Esophagus squamous epithelium (tissue), 5 donors: ENCODE measurements at regions of chr10 and their contacts with region 1.

Region 1: DNA sequence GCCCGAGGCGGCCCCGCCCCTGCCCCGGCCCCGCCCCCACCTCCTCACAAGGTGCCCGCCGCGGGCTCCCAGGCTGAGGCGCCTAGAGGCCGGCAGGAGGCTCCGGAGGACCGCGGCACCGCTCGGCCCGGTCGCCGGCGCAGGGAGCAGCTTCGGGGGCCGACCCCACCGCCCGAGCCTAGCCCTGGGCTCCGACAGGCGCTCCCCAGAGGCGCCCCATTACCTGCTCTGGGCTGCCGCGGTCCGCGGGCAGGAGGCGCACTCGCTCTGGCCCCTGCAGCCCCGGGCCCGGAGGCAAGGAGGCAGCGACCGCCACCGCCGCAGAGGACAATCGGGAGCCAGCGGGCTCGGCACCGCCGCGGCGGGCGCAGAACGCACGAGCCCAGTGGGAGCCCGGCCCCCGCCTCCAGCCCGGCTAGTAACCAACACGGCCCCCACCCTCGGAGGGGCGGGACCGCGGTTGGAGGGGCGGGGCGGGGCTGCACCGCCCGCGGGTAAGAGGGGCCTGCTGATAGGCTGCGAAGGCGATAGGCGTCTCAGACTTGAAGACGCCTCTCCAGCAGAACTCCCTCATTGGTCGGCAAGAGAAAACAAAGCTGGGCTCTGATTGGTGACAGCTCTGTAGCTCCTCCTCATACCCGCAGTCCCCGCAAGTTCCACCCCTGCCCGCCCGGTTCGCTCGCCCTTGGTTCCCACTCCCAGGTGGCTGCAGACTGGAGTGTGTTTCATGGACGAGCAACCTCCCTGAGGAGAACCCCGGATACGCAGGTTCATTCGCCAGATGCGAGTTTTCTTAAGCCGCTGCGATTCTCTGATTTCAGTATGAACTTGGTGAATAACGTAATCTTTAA is at the start of gene MPP7:
- DNase-seq: peak; percentile 85
- H3K4me3 ChIP-seq: peak within 1 kb of the TSS; percentile 63 to 98 (median 88)
- H3K27ac ChIP-seq: peak within 1 kb of the TSS; percentile 88 to 99 (median 94)
- H3K4me1 ChIP-seq: peaks cover 0 to 43% (median 4%) of the 10 kb centered on the region in 3 donors
- H3K27me3 ChIP-seq: peaks cover 0 to 19% (median 0%) of the 10 kb centered on the region in 4 donors
- CTCF ChIP-seq: peak in 4 of 6 experiments; percentile 29 to 47 (median 40)
- POLR2A ChIP-seq: peak in 2 of 4 donors; percentile 49 to 67
- total RNA-seq, gene MPP7: 34.3 to 43.3 (median 37.0) TPM

Region 2: DNA sequence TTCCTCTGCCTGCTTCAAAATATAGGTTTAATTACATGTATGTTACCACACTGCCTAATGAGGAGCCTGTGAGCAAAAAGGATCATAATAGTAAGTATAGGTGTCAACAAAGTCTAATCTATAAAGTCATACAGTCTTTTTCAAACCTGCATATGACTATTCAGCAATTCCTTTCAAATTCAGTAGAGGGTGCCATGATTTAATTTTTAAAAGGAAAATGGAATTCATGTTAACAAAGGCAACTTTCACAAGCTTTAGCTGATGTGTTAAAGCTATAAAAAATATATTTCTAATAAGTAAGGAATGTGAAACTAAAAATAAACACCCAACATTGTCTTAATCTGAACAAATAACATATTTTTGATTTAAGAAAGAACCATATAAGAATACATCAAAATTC is 52.1 kb before region 1 on chr10:
- intact Hi-C with region 1: loop called (anchors 10 kb)
- DNase-seq: no peak
- H3K4me3 ChIP-seq: no peak overlapping the region
- H3K27ac ChIP-seq: peak overlapping the region in 2 of 4 donors; percentile 52 to 73
- H3K4me1 ChIP-seq: peaks cover 4 to 64% (median 23%) of the 10 kb centered on the region in 3 donors
- H3K27me3 ChIP-seq: no peaks in the 10 kb centered on the region
- CTCF ChIP-seq: peak in 5 of 6 experiments; percentile 34 to 68 (median 52)
- POLR2A ChIP-seq: no peak

Region 3: DNA sequence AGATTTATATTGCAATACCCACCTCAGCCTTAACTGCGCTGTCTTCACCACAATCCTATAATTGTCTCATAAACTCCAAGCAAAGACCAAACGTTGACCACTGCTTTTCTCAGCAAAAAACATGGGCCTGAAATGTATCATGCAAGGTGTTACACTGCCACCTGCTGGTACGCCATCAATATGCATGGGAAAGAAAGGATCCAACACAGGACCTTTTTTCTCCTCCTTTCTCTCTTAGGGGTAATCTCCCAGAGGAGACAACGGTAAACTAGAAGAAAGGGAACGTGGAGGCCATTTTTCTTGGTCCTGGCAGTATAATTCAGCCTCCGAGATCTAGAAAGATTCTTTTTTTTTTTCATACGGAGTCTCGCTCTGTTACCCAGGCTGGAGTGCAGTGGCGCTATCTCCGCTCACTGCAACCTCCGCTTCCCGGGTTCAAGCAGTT is 79.1 kb after region 1 on chr10:
- intact Hi-C with region 1: loop called (anchors 10 kb)
- DNase-seq: peak; percentile 17
- H3K4me3 ChIP-seq: no peak overlapping the region
- H3K27ac ChIP-seq: peak overlapping the region; percentile 54 to 86 (median 74)
- H3K4me1 ChIP-seq: peaks cover 0 to 64% (median 9%) of the 10 kb centered on the region in 3 donors
- H3K27me3 ChIP-seq: no peaks in the 10 kb centered on the region
- CTCF ChIP-seq: peak; percentile 90 to 98 (median 94)
- POLR2A ChIP-seq: no peak